ENCODE measurements at regions of chr3 and their contacts with region 1.

Region 1: GRCh38 chr3:195863121-195864006 is 45.0 kb downstream of the TNK2 start:
- DNase-seq: peak; percentile 87 to 88
- H3K4me3 ChIP-seq: no peak overlapping the region
- H3K27ac ChIP-seq: peak overlapping the region; percentile 43 to 51
- H3K4me1 ChIP-seq: no peaks in the 10 kb centered on the region
- H3K27me3 ChIP-seq: no peaks in the 10 kb centered on the region
- CTCF ChIP-seq: peak; percentile 91 to 97 (median 94)
- POLR2A ChIP-seq: no peak

Region 2: GRCh38 chr3:195894780-195895607 is 31.6 kb after region 1 on chr3:
- intact Hi-C with region 1: loop called (anchors 2 kb)
- DNase-seq: peak in 1 of 2 donors; percentile 46
- H3K4me3 ChIP-seq: peak overlapping the region; percentile 47 to 62
- H3K27ac ChIP-seq: peak overlapping the region; percentile 86 to 94
- H3K4me1 ChIP-seq: peaks cover 0 to 23% of the 10 kb centered on the region in 2 donors
- H3K27me3 ChIP-seq: no peaks in the 10 kb centered on the region
- CTCF ChIP-seq: peak; percentile 91 to 94 (median 94)
- POLR2A ChIP-seq: peak in 1 of 2 donors; percentile 5

Region 3: DNA sequence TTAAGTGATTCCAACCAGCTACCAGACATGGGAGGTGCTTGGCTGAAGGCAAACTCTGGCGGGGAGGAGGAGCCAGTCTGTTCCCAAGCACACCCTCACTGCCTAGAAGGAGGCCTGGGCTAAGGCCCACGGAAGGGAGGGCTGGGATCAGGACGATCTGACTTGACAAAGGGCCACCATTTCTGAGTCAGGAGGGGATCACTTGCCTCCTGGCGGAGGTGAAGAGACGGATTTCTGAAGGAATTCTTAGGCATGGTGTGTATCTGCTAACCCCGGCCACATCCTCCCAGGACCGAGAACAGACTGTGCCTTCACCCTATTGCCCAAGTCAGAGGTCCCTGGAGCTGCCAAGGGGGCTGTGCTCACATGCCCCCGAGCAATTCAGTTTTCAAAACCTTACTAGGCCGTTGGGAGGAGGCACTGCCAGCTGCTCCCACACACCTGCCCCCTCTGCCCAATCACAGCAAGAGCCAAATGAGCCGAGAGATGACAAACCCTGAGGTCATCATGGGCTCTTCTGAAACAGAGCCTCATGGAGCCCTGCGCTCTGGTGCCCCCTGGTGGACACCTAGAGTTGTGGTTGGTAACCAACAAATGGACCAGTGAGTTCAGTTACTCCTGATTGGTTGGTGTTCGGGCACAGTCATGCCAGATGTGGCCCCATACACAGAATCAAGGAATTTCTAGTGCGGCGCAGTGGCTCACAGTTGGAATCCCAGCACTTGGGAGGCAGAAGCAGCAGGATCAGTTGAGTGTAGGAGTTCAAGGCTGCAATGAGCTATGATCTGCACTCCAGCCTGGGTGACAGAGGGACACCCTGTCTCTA is 51.5 kb after region 1 on chr3:
- intact Hi-C with region 1: loop called (anchors 2 kb)
- DNase-seq: peak; percentile 89 to 96
- H3K4me3 ChIP-seq: no peak overlapping the region
- H3K27ac ChIP-seq: peak overlapping the region; percentile 83 to 94
- H3K4me1 ChIP-seq: peaks cover 0 to 4% of the 10 kb centered on the region in 2 donors
- H3K27me3 ChIP-seq: no peaks in the 10 kb centered on the region
- CTCF ChIP-seq: peak; percentile 89 to 97 (median 95)
- POLR2A ChIP-seq: peak in 1 of 2 donors; percentile 32

Measured in uterus (tissue), 4 donors.